H1 (cell line): ENCODE measurements at regions of chr14 and their contacts with region 1.

Region 1: GRCh38 chr14:89466484-89466883 is 49.5 kb upstream of the FOXN3 start:
- DNase-seq: no peak
- H3K4me3 ChIP-seq: no peak overlapping the region
- H3K27ac ChIP-seq: no peak overlapping the region
- H3K4me1 ChIP-seq: peaks cover 0 to 4% (median 2%) of the 10 kb centered on the region in 4 experiments; a peak in 5 of 7 replicates
- H3K27me3 ChIP-seq: no peaks in the 10 kb centered on the region
- CTCF ChIP-seq: no peak
- EP300 ChIP-seq: no peak
- POLR2A ChIP-seq: no peak
- RAD21 ChIP-seq: no peak

Region 2: GRCh38 chr14:89447182-89447944 is 19.1 kb before region 1 on chr14:
- CTCF ChIA-PET with region 1: interaction called, 18 read pairs
- POLR2A ChIA-PET with region 1: no interaction called
- DNase-seq: no peak
- H3K4me3 ChIP-seq: no peak overlapping the region
- H3K27ac ChIP-seq: no peak overlapping the region
- H3K4me1 ChIP-seq: peaks cover 6 to 25% (median 14%) of the 10 kb centered on the region in 4 experiments
- H3K27me3 ChIP-seq: no peaks in the 10 kb centered on the region; a peak in 1 of 7 replicates
- CTCF ChIP-seq: no peak
- EP300 ChIP-seq: no peak
- POLR2A ChIP-seq: no peak
- RAD21 ChIP-seq: no peak

Region 3: DNA sequence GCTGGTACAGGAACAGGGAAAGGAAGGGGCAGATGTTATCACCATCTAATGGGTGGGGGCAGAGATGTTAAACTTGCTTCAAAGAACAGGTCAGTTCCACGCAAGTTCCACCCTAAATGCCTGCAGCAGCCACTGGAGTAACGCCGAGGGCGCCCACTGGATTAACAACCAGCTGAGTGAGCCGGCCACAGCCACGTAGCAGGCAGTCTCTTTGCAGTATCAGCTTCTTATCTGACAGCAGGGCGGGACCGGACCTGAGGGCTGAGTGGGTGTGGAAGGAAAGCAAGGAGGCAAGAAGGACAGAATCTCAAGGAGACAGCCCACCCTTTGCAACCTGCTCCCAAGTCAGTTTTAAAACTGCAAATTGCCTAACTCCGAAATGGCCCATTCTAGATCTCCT is 11.1 kb before region 1 on chr14:
- CTCF ChIA-PET with region 1: interaction called, 18 read pairs
- POLR2A ChIA-PET with region 1: no interaction called
- DNase-seq: no peak
- H3K4me3 ChIP-seq: no peak overlapping the region
- H3K27ac ChIP-seq: no peak overlapping the region
- H3K4me1 ChIP-seq: peaks cover 2 to 25% (median 14%) of the 10 kb centered on the region in 4 experiments; a peak in 6 of 7 replicates
- H3K27me3 ChIP-seq: no peaks in the 10 kb centered on the region; a peak in 1 of 7 replicates
- CTCF ChIP-seq: no peak
- EP300 ChIP-seq: no peak
- POLR2A ChIP-seq: no peak
- RAD21 ChIP-seq: no peak

Region 4: GRCh38 chr14:89493877-89494634 is 27.6 kb after region 1 on chr14:
- CTCF ChIA-PET with region 1: interaction called, 11 read pairs
- POLR2A ChIA-PET with region 1: no interaction called
- DNase-seq: no peak
- H3K4me3 ChIP-seq: no peak overlapping the region
- H3K27ac ChIP-seq: no peak overlapping the region
- H3K4me1 ChIP-seq: peaks cover 3 to 21% (median 11%) of the 10 kb centered on the region in 4 experiments; a peak in 5 of 7 replicates
- H3K27me3 ChIP-seq: no peaks in the 10 kb centered on the region
- CTCF ChIP-seq: no peak
- EP300 ChIP-seq: no peak
- POLR2A ChIP-seq: no peak
- RAD21 ChIP-seq: no peak